Right cardiac atrium (tissue), 5 donors: ENCODE measurements at regions of chr1 and their contacts with region 1.

Region 1: DNA sequence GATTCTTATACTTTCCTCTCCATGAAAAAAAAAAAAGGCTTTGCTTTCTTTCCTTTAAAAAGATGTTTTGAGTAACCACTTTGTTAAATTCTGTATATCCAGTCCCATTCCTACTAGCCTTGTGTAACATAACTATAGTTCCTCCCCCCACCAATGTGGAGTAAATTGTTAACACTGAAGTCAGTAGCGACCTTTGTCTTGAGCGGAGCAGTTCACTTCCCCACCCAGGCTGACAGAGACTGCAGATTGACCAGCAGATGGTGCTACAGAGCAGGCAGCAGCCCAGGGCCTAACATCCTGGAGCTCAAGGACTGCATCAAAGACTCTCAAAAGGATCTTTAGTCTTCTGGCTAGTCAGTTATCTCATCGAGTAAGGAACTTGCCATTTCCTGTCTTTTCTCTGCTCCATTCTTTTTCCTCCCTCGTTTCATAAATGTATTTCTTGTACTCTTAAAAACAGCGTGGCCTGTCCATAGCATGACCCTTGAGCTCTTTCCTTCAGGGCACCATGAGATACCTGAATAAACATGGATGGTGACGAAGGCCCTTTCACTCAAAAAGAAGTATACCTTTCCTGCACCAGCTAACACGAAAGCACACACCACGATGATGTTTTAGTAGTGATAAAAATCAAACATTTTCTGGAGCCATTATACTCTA is 503.5 kb upstream of the PKN2 start:
- DNase-seq: peak; percentile 60 to 79 (median 77)
- ATAC-seq: peak; percentile 92 to 93
- H3K4me3 ChIP-seq: no peak overlapping the region
- H3K27ac ChIP-seq: no peak overlapping the region
- H3K4me1 ChIP-seq: no peaks in the 10 kb centered on the region
- H3K27me3 ChIP-seq: no peaks in the 10 kb centered on the region

Region 2: DNA sequence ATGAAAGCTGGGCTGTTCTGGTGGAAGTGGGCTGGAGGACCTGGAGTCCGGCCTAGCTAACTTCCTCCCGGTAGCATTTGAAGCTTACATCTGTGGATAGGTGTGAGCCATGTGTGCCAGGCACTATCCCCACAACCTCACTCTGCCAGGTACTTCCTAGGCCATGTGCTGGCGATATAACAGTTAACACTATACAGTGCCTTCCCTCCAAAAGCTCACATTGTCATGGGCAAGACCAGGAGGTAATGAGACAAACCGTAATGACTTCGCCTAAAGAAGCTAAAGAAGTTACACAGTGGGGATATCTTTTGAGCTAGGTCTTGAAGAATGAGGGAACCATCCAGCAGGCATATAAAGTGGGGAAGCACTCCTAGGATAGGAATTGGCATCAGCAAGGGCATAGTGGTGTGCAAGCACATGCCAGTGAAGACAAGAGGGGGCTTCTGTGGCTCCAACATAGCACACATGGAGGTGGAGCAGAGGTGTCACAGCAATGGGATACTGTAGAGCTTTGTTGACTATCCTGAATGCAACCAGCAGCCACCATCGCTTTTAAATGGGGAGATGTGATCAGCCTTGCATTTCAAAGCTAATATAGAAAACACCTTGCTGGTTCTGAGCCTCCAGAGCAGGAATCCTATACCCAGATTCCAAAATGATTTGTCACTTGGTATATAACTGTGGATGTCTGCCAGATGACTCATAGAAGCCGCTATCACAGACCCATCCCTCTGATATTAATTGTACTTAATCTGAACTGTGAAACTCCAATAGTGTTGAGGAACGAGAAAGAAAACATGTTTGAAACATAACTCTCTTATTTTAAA is 385.6 kb before region 1 on chr1:
- intact Hi-C with region 1: no loop called
- DNase-seq: no peak
- ATAC-seq: no peak
- H3K4me3 ChIP-seq: no peak overlapping the region
- H3K27ac ChIP-seq: no peak overlapping the region
- H3K4me1 ChIP-seq: no peaks in the 10 kb centered on the region
- H3K27me3 ChIP-seq: no peaks in the 10 kb centered on the region

Region 3: DNA sequence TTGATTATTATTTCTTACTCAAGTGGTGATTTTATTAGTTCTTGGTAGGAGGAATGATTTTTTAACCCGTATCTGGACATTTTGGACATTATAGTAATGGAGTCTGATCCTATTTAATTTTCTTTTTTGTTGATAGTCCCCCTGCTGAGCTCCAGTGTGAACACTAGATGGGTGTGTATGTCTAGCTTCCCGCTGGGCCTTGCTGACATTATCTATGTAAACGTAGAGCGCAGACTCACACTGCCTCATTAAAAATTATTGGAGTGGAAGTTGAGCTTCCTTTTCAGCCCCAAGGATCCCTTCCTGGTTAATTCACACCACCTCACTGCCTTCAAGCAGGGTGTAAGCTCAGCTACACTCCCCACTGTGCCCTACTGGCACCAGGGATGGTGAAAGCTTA is 35.9 kb after region 1 on chr1:
- intact Hi-C with region 1: no loop called
- DNase-seq: no peak
- ATAC-seq: no peak
- H3K4me3 ChIP-seq: no peak overlapping the region
- H3K27ac ChIP-seq: no peak overlapping the region
- H3K4me1 ChIP-seq: no peaks in the 10 kb centered on the region
- H3K27me3 ChIP-seq: no peaks in the 10 kb centered on the region

Region 4: DNA sequence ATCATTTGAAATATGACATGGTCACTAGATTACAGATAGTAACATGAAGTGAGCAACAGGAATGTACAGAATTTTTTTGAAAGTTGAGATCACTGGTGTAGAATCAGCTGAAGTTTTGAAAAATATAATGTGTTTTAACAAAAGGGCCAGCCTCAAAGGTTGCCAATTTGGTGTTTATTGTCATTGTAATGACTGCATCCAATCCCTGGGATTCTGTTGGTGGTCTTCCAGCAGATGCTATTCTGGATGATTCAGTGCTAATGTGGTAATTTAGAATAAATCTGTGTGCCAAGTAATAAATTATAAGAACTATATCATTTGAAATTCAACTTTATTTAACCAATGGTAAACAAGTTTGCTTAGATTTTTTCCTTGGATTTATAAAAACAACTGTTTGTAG is 67.1 kb after region 1 on chr1:
- intact Hi-C with region 1: loop called in 1 of 4 experiments (anchors 10 kb)
- DNase-seq: no peak
- ATAC-seq: no peak
- H3K4me3 ChIP-seq: no peak overlapping the region
- H3K27ac ChIP-seq: no peak overlapping the region
- H3K4me1 ChIP-seq: no peaks in the 10 kb centered on the region
- H3K27me3 ChIP-seq: no peaks in the 10 kb centered on the region

Region 5: DNA sequence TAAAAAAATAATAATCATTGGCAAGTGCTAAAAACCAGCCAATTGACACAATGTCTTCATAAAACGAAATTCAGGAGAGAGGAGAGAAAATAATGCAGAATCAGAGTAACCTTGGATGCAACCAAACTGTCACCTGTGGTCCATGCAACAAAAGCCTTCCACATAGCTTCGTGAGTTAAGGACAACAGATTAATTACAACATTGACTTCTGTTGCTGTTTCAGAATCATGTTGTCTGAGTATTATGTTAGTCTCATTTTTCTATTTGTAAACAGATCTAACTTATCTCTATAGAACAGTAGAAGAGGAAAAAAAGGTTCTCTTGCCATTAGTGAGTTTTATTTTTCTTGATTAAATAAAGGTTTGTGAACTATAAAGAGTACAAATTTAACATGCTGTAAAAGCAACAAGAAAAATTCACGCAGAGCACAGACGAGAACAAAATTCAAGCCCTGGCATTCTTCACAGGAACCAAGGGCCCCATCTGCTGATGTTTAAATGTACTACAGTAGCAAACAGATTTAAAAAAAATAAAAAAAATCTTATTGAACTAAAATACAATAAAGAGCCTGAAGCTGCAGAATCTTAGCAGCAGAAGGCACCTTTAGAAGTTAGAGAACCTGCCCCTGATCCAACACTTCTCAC is 122.4 kb after region 1 on chr1:
- intact Hi-C with region 1: loop called in 1 of 4 experiments (anchors 10 kb)
- DNase-seq: no peak
- ATAC-seq: no peak
- H3K4me3 ChIP-seq: no peak overlapping the region
- H3K27ac ChIP-seq: no peak overlapping the region
- H3K4me1 ChIP-seq: no peaks in the 10 kb centered on the region
- H3K27me3 ChIP-seq: no peaks in the 10 kb centered on the region

Region 6: DNA sequence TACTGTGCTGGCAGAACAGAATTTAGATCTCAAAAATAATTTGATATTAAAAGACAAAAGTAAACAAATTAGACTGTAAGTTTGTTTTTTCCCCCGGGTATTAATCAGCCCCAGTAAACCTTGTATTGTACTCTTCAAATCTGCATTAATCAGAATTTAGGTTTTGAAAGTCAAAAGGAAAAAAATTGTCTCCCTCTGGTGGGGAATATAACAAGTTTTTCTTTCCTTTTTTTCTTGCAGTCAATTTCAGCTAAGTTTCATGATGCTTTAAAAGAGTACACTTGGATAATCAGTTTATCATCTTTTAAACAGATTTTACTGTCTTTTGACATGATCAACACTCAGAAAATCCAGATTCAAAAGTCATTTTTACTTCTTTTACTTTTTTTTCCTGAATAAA is 369.0 kb after region 1 on chr1:
- intact Hi-C with region 1: loop called in 2 of 4 experiments (anchors 5 to 10 kb)
- DNase-seq: no peak
- ATAC-seq: no peak
- H3K4me3 ChIP-seq: no peak overlapping the region
- H3K27ac ChIP-seq: no peak overlapping the region
- H3K4me1 ChIP-seq: no peaks in the 10 kb centered on the region
- H3K27me3 ChIP-seq: no peaks in the 10 kb centered on the region